Activated CD4-positive, alpha-beta memory T cell treated with anti-CD3 and anti-CD28 coated beads, Interleukin-2, amount 10 ng/mL, durations not matched to agents 7 days and 5 days (primary cell): ENCODE measurements at regions of chr17 and their contacts with region 1.

Region 1: DNA sequence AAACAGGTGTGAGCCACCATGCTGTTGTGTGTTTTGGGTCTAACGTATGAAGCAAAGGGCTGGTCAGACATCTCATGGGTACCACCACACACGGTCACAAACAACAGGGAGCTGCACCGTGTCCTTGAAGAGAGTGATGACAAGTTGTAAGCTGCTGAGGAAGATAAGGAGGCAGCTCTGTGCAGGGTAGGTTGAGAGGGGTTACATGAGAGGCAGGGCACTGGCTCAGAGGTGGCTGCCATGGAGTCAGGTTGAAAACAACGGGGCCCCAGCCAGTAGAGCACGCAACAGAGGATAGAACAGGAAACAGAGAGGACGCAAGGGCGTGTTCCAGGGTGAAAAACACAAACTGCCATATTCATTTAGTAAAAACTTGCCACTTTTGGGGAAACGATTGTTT is 52.2 kb downstream of the TRARG1 start:
- DNase-seq: peak; percentile 58
- H3K4me3 Mint-ChIP-seq: no peak overlapping the region
- H3K27ac Mint-ChIP-seq: peak overlapping the region; percentile 56
- H3K4me1 Mint-ChIP-seq: peaks cover 14% of the 10 kb centered on the region
- H3K27me3 Mint-ChIP-seq: peaks cover 3% of the 10 kb centered on the region

Region 2: DNA sequence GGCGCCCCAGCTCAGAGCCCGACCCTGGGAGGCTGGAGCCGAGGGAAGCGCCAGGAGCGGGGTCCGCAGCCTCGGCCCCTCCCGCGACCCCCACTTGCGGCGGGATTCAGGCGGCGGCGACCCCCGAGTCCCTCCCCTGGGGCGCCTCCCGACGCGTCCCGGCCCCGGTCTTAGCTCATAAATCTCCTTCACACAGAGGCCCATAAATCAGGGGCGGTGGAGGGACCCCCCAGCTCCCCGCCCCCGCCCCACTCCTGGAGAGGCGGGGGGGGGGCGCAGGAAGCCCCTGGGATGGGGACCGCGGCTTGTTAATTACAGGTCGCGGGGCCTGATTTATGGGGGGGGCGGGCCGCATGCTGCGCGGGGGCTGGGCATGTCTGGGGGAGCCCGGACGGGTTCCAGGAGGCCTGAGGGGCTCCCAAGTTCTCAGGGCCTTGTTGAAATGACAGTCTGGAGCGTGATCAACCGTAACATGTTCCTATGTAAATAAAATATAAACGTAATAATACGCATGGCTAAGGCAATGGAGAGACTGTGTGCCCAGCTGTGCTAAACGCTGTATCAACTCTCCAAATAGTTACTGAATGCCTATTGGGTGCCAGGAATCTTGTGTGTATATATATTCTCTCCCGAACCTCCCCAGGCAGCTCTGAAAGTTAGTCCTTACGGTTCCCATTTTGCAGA is 71.5 kb before region 1 on chr17:
- CTCF ChIA-PET with region 1: interaction called, 31 read pairs
- POLR2A ChIA-PET with region 1: interaction called, 3 read pairs
- DNase-seq: no peak
- H3K4me3 Mint-ChIP-seq: peak overlapping the region; percentile 15
- H3K27ac Mint-ChIP-seq: no peak overlapping the region
- H3K4me1 Mint-ChIP-seq: peaks cover 29% of the 10 kb centered on the region
- H3K27me3 Mint-ChIP-seq: peaks cover 17% of the 10 kb centered on the region

Region 3: GRCh38 chr17:1267471-1267947 is 64.2 kb before region 1 on chr17:
- CTCF ChIA-PET with region 1: interaction called, 21 read pairs
- POLR2A ChIA-PET with region 1: interaction called, 3 read pairs
- DNase-seq: no peak
- H3K4me3 Mint-ChIP-seq: peak overlapping the region; percentile 70
- H3K27ac Mint-ChIP-seq: peak overlapping the region; percentile 35
- H3K4me1 Mint-ChIP-seq: peaks cover 19% of the 10 kb centered on the region
- H3K27me3 Mint-ChIP-seq: peaks cover 15% of the 10 kb centered on the region

Region 4: GRCh38 chr17:1275962-1276736 is 55.6 kb before region 1 on chr17:
- CTCF ChIA-PET with region 1: interaction called, 23 read pairs
- POLR2A ChIA-PET with region 1: no interaction called
- DNase-seq: peak; percentile 78
- H3K4me3 Mint-ChIP-seq: no peak overlapping the region
- H3K27ac Mint-ChIP-seq: no peak overlapping the region
- H3K4me1 Mint-ChIP-seq: peaks cover 10% of the 10 kb centered on the region
- H3K27me3 Mint-ChIP-seq: peaks cover 30% of the 10 kb centered on the region

Region 5: DNA sequence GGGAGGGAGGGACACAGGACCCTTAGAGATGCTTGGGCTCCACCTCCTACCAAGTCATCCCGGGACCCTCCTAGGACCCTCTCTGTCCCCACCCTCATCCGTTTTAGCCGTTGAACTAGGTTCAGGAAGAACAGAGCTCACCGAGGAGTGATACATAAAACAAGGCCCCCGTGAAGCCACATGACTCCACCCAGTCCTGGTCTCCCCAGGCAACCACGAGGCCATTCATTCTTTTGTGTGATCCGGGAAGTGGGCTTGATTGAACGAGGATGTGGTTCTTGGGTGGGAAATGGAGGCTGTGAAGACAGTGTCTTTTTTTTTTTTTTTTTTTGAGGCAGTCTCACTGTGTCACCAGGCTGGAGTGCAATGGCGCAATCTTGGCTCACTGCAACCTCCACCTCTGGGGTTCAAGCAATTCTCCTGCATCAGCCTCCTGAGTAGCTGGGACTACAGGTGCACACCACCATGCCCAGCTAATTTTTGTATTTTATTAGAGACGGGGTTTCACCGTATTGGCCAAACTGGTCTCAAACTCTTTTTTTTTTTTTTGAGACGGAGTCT is 37.5 kb before region 1 on chr17:
- CTCF ChIA-PET with region 1: interaction called, 10 read pairs
- POLR2A ChIA-PET with region 1: interaction called, 4 read pairs
- DNase-seq: peak; percentile 94
- H3K4me3 Mint-ChIP-seq: peak overlapping the region; percentile 36
- H3K27ac Mint-ChIP-seq: peak overlapping the region; percentile 96
- H3K4me1 Mint-ChIP-seq: peaks cover 76% of the 10 kb centered on the region
- H3K27me3 Mint-ChIP-seq: peaks cover 3% of the 10 kb centered on the region

Region 6: GRCh38 chr17:1390433-1391367 is 59.0 kb after region 1 on chr17:
- CTCF ChIA-PET with region 1: no interaction called
- POLR2A ChIA-PET with region 1: no interaction called
- DNase-seq: no peak
- H3K4me3 Mint-ChIP-seq: no peak overlapping the region
- H3K27ac Mint-ChIP-seq: peak overlapping the region; percentile 12
- H3K4me1 Mint-ChIP-seq: peaks cover 63% of the 10 kb centered on the region
- H3K27me3 Mint-ChIP-seq: no peaks in the 10 kb centered on the region